Activated CD4-positive, alpha-beta memory T cell treated with anti-CD3 and anti-CD28 coated beads for 36 hours (primary cell): ENCODE measurements at regions of chr1 and their contacts with region 1.

Region 1: GRCh38 chr1:233675893-233676292 is 62.0 kb downstream of the KCNK1 start:
- DNase-seq: no peak
- H3K4me3 Mint-ChIP-seq: no peak overlapping the region
- H3K27ac Mint-ChIP-seq: no peak overlapping the region
- H3K4me1 Mint-ChIP-seq: no peaks in the 10 kb centered on the region
- H3K27me3 Mint-ChIP-seq: peaks cover 16% of the 10 kb centered on the region

Region 2: GRCh38 chr1:233406994-233407631 is 268.8 kb before region 1 on chr1:
- CTCF ChIA-PET with region 1: no interaction called
- POLR2A ChIA-PET with region 1: no interaction called
- intact Hi-C with region 1: loop called (anchors 10 kb)
- DNase-seq: peak; percentile 23
- H3K4me3 Mint-ChIP-seq: no peak overlapping the region
- H3K27ac Mint-ChIP-seq: peak overlapping the region; percentile 81
- H3K4me1 Mint-ChIP-seq: peaks cover 26% of the 10 kb centered on the region
- H3K27me3 Mint-ChIP-seq: peaks cover 18% of the 10 kb centered on the region

Region 3: DNA sequence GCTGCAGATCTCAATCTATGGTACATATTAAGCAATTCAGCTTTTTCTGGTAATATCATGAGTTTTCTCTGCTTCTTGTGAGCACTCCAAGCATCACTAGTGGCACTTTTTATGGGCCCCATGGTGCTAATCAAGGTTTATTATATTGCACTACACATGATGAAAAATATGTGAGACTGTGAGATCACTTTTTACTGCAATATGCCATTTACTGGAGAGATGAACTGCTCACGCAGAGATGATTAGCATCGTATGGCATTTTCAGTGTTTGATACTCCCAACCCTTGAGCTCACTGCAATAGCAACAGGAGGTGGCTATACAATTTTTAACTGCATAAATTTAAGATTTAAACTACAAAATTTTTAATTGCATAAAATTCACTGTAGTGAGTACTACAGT is 70.7 kb before region 1 on chr1:
- CTCF ChIA-PET with region 1: no interaction called
- POLR2A ChIA-PET with region 1: no interaction called
- intact Hi-C with region 1: no loop called
- DNase-seq: no peak
- H3K4me3 Mint-ChIP-seq: no peak overlapping the region
- H3K27ac Mint-ChIP-seq: no peak overlapping the region
- H3K4me1 Mint-ChIP-seq: peaks cover 12% of the 10 kb centered on the region
- H3K27me3 Mint-ChIP-seq: peaks cover 28% of the 10 kb centered on the region